HCT116 (cell line): ENCODE measurements at regions of chr11 and their contacts with region 1.

Region 1: DNA sequence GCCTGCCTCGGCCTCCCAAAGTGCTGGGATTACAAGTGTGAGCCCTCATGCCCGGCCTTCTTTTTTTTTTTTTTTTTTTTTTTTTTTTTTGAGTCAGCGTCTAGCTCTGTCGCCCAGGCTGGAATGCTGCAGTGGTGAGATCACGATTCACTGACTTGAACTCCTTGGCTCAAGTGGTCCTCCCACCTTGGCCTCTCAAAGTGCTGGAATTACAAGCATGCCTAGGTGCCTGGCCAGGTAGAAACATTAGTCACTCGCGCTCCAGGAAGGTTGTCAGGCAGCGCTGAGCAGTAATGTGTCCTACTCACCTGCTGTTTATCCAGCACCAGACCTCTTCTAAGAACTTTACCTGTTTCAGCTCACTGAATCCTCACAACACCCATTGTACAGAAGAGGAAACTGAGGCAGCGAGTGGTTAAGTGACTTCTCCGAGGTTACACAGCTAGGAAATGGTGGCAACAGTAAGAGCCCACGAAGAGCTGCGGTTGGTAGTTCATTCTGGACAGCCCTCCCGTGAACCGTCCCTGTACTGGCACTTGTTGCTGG is 496 bp upstream of the CST6 start:
- DNase-seq: peak; percentile 91
- ATAC-seq: peak; percentile 52
- H3K4me3 ChIP-seq: peak overlapping the region; percentile 44 to 59
- H3K27ac ChIP-seq: peak overlapping the region; percentile 89
- H3K4me1 ChIP-seq: peaks cover 77 to 100% of the 10 kb centered on the region in 2 experiments
- H3K27me3 ChIP-seq: no peaks in the 10 kb centered on the region
- CTCF ChIP-seq: no peak
- POLR2A ChIP-seq: no peak
- RAD21 ChIP-seq: no peak

Region 2: GRCh38 chr11:66022401-66023185 is 11.3 kb after region 1 on chr11:
- CTCF ChIA-PET with region 1: interaction called, 22 read pairs
- POLR2A ChIA-PET with region 1: interaction called, 10 read pairs
- RAD21 ChIA-PET with region 1: no interaction called
- intact Hi-C with region 1: no loop called
- DNase-seq: no peak
- ATAC-seq: peak; percentile 81
- H3K4me3 ChIP-seq: 0 out of 4 replicates have a peak overlapping the region, but pooled peaks of 1 of the 2 experiments have one; percentile 13
- H3K27ac ChIP-seq: no peak overlapping the region; the same call in 1 of the 2 replicates
- H3K4me1 ChIP-seq: peaks cover 14 to 47% of the 10 kb centered on the region in 2 experiments
- H3K27me3 ChIP-seq: no peaks in the 10 kb centered on the region
- CTCF ChIP-seq: peak in 2 of 3 experiments; percentile 90 to 91; a peak in 4 of 6 replicates
- POLR2A ChIP-seq: no peak
- RAD21 ChIP-seq: no peak

Region 3: GRCh38 chr11:66045177-66045639 is 33.9 kb after region 1 on chr11:
- CTCF ChIA-PET with region 1: interaction called, 10 read pairs
- POLR2A ChIA-PET with region 1: no interaction called
- RAD21 ChIA-PET with region 1: no interaction called
- intact Hi-C with region 1: no loop called
- DNase-seq: peak; percentile 63
- ATAC-seq: peak; percentile 95
- H3K4me3 ChIP-seq: 0 out of 4 replicates have a peak overlapping the region, but pooled peaks of 1 of the 2 experiments have one; percentile 2
- H3K27ac ChIP-seq: no peak overlapping the region
- H3K4me1 ChIP-seq: peaks cover 6 to 9% of the 10 kb centered on the region in 2 experiments; a peak in 3 of 4 replicates
- H3K27me3 ChIP-seq: no peaks in the 10 kb centered on the region
- CTCF ChIP-seq: peak; percentile 86 to 97 (median 88)
- POLR2A ChIP-seq: no peak
- RAD21 ChIP-seq: no peak

Region 4: GRCh38 chr11:66291706-66292549 is 280.6 kb after region 1 on chr11 and contains the start of gene TMEM151A:
- CTCF ChIA-PET with region 1: no interaction called
- POLR2A ChIA-PET with region 1: no interaction called
- RAD21 ChIA-PET with region 1: no interaction called
- intact Hi-C with region 1: no loop called
- DNase-seq: no peak
- ATAC-seq: no peak
- H3K4me3 ChIP-seq: peak within 1 kb of the TSS; percentile 54 to 67
- H3K27ac ChIP-seq: peak within 1 kb of the TSS; percentile 58; the same call in 1 of the 2 replicates
- H3K4me1 ChIP-seq: peaks cover 22 to 45% of the 10 kb centered on the region in 2 experiments
- H3K27me3 ChIP-seq: no peaks in the 10 kb centered on the region
- CTCF ChIP-seq: no peak
- POLR2A ChIP-seq: no peak
- RAD21 ChIP-seq: no peak
- total RNA-seq, gene TMEM151A: 5.9 TPM